ENCODE measurements at regions of chr17 and their contacts with region 1.

Region 1: GRCh38 chr17:49788478-49789242 is at the start of gene KAT7:
- DNase-seq: peak; percentile 99 to 100 (median 99)
- ATAC-seq: peak; percentile 95 to 97 (median 97)
- H3K4me3 ChIP-seq: peak within 1 kb of the TSS; percentile 77 to 100 (median 96)
- H3K27ac ChIP-seq: peak within 1 kb of the TSS; percentile 89 to 100 (median 99)
- H3K4me1 ChIP-seq: peaks cover 6 to 60% (median 42%) of the 10 kb centered on the region in 12 donors
- H3K27me3 ChIP-seq: no peaks in the 10 kb centered on the region
- CTCF ChIP-seq: peak in 7 of 12 donors; percentile 9 to 43 (median 25)
- POLR2A ChIP-seq: peak; percentile 38 to 87
- total RNA-seq, gene KAT7: 34.3 to 80.9 (median 56.0) TPM

Region 2: GRCh38 chr17:49763735-49764558 is 24.7 kb before region 1 on chr17 and contains the start of gene FAM117A:
- intact Hi-C with region 1: loop called in 1 of 10 experiments (anchors 1 kb)
- DNase-seq: peak; percentile 94 to 97 (median 97)
- ATAC-seq: peak; percentile 99
- H3K4me3 ChIP-seq: peak within 1 kb of the TSS; percentile 67 to 96 (median 74)
- H3K27ac ChIP-seq: peak within 1 kb of the TSS in 11 of 12 donors; percentile 46 to 89 (median 68)
- H3K4me1 ChIP-seq: peaks cover 0 to 45% (median 17%) of the 10 kb centered on the region in 12 donors
- H3K27me3 ChIP-seq: no peaks in the 10 kb centered on the region
- CTCF ChIP-seq: no peak
- POLR2A ChIP-seq: peak in 1 of 2 donors; percentile 66
- total RNA-seq, gene FAM117A: 5.9 to 18.5 (median 14.9) TPM

Region 3: GRCh38 chr17:49775543-49776260 is 13.0 kb before region 1 on chr17:
- intact Hi-C with region 1: no loop called
- DNase-seq: no peak
- ATAC-seq: peak in 3 of 4 donors; percentile 33 to 51 (median 41)
- H3K4me3 ChIP-seq: no peak overlapping the region
- H3K27ac ChIP-seq: peak overlapping the region in 6 of 12 donors; percentile 2 to 77 (median 42)
- H3K4me1 ChIP-seq: peaks cover 0 to 39% (median 15%) of the 10 kb centered on the region in 12 donors
- H3K27me3 ChIP-seq: no peaks in the 10 kb centered on the region
- CTCF ChIP-seq: no peak
- POLR2A ChIP-seq: no peak

Region 4: GRCh38 chr17:49829026-49829425 is 40.4 kb after region 1 on chr17:
- intact Hi-C with region 1: loop called in 1 of 10 experiments (anchors 5 kb)
- DNase-seq: no peak
- ATAC-seq: no peak
- H3K4me3 ChIP-seq: no peak overlapping the region
- H3K27ac ChIP-seq: peak overlapping the region in 9 of 12 donors; percentile 29 to 68 (median 47)
- H3K4me1 ChIP-seq: peaks cover 0 to 53% (median 18%) of the 10 kb centered on the region in 12 donors
- H3K27me3 ChIP-seq: no peaks in the 10 kb centered on the region
- CTCF ChIP-seq: no peak
- POLR2A ChIP-seq: no peak

Region 5: GRCh38 chr17:49851387-49852291 is 63.0 kb after region 1 on chr17:
- intact Hi-C with region 1: loop called in 6 of 10 experiments (anchors 2 to 10 kb)
- DNase-seq: peak; percentile 81 to 89 (median 83)
- ATAC-seq: peak; percentile 65 to 88 (median 80)
- H3K4me3 ChIP-seq: peak overlapping the region; percentile 40 to 82 (median 64)
- H3K27ac ChIP-seq: peak overlapping the region in 9 of 12 donors; percentile 20 to 72 (median 58)
- H3K4me1 ChIP-seq: peaks cover 0 to 24% (median 13%) of the 10 kb centered on the region in 12 donors
- H3K27me3 ChIP-seq: no peaks in the 10 kb centered on the region
- CTCF ChIP-seq: peak; percentile 70 to 86 (median 77)
- POLR2A ChIP-seq: no peak

Measured in heart left ventricle (tissue), 16 donors.